H1 (cell line): ENCODE measurements at regions of chr15 and their contacts with region 1.

Region 1: GRCh38 chr15:40893733-40894688 is at the start of gene VPS18:
- DNase-seq: peak; percentile 95 to 100
- H3K4me3 ChIP-seq: peak within 1 kb of the TSS; percentile 60 to 93 (median 88)
- H3K27ac ChIP-seq: peak within 1 kb of the TSS; percentile 68
- H3K4me1 ChIP-seq: peaks cover 3 to 14% (median 7%) of the 10 kb centered on the region in 4 experiments; a peak in 6 of 7 replicates
- H3K27me3 ChIP-seq: peaks cover 0 to 8% (median 2%) of the 10 kb centered on the region in 4 experiments; a peak in 3 of 7 replicates
- CTCF ChIP-seq: peak; percentile 85 to 91 (median 89)
- EP300 ChIP-seq: no peak
- POLR2A ChIP-seq: peak in 1 of 2 experiments; percentile 35; a peak in 2 of 3 replicates
- RAD21 ChIP-seq: peak; percentile 87 to 88
- total RNA-seq, gene VPS18: 31.9 and 32.7 TPM in 2 replicates

Region 2: DNA sequence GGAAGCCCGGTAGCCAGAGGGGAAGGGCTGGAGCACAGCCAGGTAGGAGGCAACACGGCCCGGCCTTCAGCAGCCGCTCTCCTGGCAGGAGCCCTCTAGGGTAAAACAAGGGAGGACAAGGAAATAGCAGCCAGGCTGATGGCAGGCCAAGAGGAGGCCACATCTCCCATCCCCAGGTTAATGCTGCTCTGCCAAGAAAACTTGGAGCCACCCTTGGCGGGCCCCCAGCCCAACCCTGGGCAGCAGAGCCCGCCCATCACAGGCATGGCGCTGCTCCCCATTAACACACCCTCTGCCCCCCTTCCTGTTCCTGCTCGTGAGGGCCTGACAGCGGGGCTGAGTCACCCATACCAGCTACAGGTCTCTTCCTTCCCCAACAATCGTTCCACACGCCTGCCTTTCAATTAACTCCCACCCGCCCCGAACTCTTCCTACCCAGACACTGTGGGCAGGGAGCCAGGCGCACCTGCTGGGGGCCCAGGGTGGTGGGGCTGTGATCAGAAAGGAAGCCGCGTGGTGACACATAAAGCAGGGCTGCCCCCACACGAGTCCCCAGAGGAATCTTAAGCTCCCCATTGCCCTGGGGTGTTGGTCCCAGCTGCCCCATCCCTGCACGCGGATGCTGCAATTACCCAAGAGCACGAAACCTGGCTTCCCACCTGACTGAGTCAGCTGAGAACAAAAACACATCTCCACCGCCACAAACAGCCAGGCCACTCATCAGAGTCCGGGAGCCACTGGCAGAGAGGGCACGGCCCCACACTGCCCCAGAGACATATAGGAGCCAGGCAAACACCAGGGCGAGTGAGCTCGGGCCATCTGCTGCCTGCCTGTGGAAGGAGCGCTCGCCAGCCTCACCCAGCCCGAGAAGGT is 124.5 kb before region 1 on chr15 and contains the start of gene C15orf62:
- CTCF ChIA-PET with region 1: interaction called, 10 read pairs
- POLR2A ChIA-PET with region 1: interaction called, 3 read pairs
- DNase-seq: no peak
- H3K4me3 ChIP-seq: no peak within 1 kb of the TSS
- H3K27ac ChIP-seq: no peak within 1 kb of the TSS; the same call in 1 of the 2 replicates
- H3K4me1 ChIP-seq: peaks cover 5 to 27% (median 15%) of the 10 kb centered on the region in 4 experiments
- H3K27me3 ChIP-seq: no peaks in the 10 kb centered on the region
- CTCF ChIP-seq: no peak
- EP300 ChIP-seq: no peak
- POLR2A ChIP-seq: no peak; a peak in 1 of 3 replicates
- RAD21 ChIP-seq: no peak
- total RNA-seq, gene C15orf62: 0.56 and 0.57 TPM in 2 replicates

Region 3: GRCh38 chr15:40857601-40858341 is 36.2 kb before region 1 on chr15:
- CTCF ChIA-PET with region 1: interaction called, 208 read pairs
- POLR2A ChIA-PET with region 1: interaction called, 49 read pairs
- DNase-seq: peak in 1 of 2 experiments; percentile 99
- H3K4me3 ChIP-seq: no peak overlapping the region
- H3K27ac ChIP-seq: no peak overlapping the region
- H3K4me1 ChIP-seq: peaks cover 0 to 3% (median 0%) of the 10 kb centered on the region in 4 experiments; a peak in 1 of 7 replicates
- H3K27me3 ChIP-seq: no peaks in the 10 kb centered on the region
- CTCF ChIP-seq: peak; percentile 95 to 99 (median 99)
- EP300 ChIP-seq: peak in 1 of 2 experiments; percentile 19; a peak in 1 of 3 replicates
- POLR2A ChIP-seq: no peak; a peak in 1 of 3 replicates
- RAD21 ChIP-seq: peak; percentile 73 to 82

Region 4: GRCh38 chr15:40873625-40874561 is 20.1 kb before region 1 on chr15 and contains the start of gene RHOV:
- CTCF ChIA-PET with region 1: interaction called, 63 read pairs
- POLR2A ChIA-PET with region 1: interaction called, 8 read pairs
- DNase-seq: peak; percentile 51 to 87
- H3K4me3 ChIP-seq: peak within 1 kb of the TSS; percentile 45 to 70 (median 58)
- H3K27ac ChIP-seq: no peak within 1 kb of the TSS
- H3K4me1 ChIP-seq: peaks cover 0 to 18% (median 12%) of the 10 kb centered on the region in 4 experiments; a peak in 6 of 7 replicates
- H3K27me3 ChIP-seq: 0 out of 7 replicates have a peak, but pooled peaks cover 0 to 2% (median 0%) of the 10 kb centered on the region in 4 experiments
- CTCF ChIP-seq: peak; percentile 36 to 42 (median 40)
- EP300 ChIP-seq: no peak
- POLR2A ChIP-seq: peak in 1 of 2 experiments; percentile 53; a peak in 2 of 3 replicates
- RAD21 ChIP-seq: no peak; a peak in 1 of 4 replicates
- total RNA-seq, gene RHOV: 2.4 and 2.7 TPM in 2 replicates

Region 5: GRCh38 chr15:40941528-40942336 is 47.7 kb after region 1 on chr15:
- CTCF ChIA-PET with region 1: interaction called, 619 read pairs
- POLR2A ChIA-PET with region 1: interaction called, 5 read pairs
- DNase-seq: peak in 1 of 2 experiments; percentile 90
- H3K4me3 ChIP-seq: peak overlapping the region; percentile 30 to 64 (median 52)
- H3K27ac ChIP-seq: peak overlapping the region; percentile 58; the same call in 1 of the 2 replicates
- H3K4me1 ChIP-seq: peaks cover 0 to 28% (median 12%) of the 10 kb centered on the region in 4 experiments; a peak in 6 of 7 replicates
- H3K27me3 ChIP-seq: peaks cover 0 to 25% (median 16%) of the 10 kb centered on the region in 4 experiments; a peak in 6 of 7 replicates
- CTCF ChIP-seq: peak; percentile 71 to 80 (median 76)
- EP300 ChIP-seq: 0 out of 3 replicates have a peak, but pooled peaks of 1 of the 2 experiments have one; percentile 23
- POLR2A ChIP-seq: no peak
- RAD21 ChIP-seq: peak; percentile 36 to 71; a peak in 3 of 4 replicates

Region 6: GRCh38 chr15:40960926-40961325 is 66.9 kb after region 1 on chr15:
- CTCF ChIA-PET with region 1: interaction called, 10 read pairs
- POLR2A ChIA-PET with region 1: interaction called, 4 read pairs
- DNase-seq: no peak
- H3K4me3 ChIP-seq: no peak overlapping the region
- H3K27ac ChIP-seq: no peak overlapping the region
- H3K4me1 ChIP-seq: no peaks in the 10 kb centered on the region; a peak in 5 of 7 replicates
- H3K27me3 ChIP-seq: no peaks in the 10 kb centered on the region
- CTCF ChIP-seq: no peak
- EP300 ChIP-seq: no peak
- POLR2A ChIP-seq: no peak
- RAD21 ChIP-seq: no peak

Region 7: DNA sequence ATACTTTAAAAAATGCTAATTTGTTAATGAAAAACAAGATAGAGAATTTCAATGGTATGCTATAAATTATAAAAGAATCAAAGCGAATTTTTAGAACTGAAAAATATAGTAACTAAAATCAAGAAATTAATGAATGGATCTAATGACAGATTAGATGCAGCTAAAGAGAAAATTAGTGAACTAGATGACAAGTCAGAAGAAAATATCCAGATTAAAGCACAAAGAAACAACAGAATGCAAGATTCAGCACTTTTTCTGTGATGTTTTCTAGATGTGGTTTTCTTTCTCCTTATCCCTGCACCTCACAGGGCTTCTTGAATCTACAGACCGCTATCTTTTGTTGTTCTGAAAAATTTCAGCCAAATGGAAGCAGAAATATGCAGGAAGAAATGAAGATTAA is 167.7 kb after region 1 on chr15:
- CTCF ChIA-PET with region 1: no interaction called
- POLR2A ChIA-PET with region 1: no interaction called
- DNase-seq: no peak
- H3K4me3 ChIP-seq: no peak overlapping the region
- H3K27ac ChIP-seq: no peak overlapping the region
- H3K4me1 ChIP-seq: no peaks in the 10 kb centered on the region
- H3K27me3 ChIP-seq: no peaks in the 10 kb centered on the region
- CTCF ChIP-seq: no peak
- EP300 ChIP-seq: no peak
- POLR2A ChIP-seq: no peak
- RAD21 ChIP-seq: no peak

Region 8: DNA sequence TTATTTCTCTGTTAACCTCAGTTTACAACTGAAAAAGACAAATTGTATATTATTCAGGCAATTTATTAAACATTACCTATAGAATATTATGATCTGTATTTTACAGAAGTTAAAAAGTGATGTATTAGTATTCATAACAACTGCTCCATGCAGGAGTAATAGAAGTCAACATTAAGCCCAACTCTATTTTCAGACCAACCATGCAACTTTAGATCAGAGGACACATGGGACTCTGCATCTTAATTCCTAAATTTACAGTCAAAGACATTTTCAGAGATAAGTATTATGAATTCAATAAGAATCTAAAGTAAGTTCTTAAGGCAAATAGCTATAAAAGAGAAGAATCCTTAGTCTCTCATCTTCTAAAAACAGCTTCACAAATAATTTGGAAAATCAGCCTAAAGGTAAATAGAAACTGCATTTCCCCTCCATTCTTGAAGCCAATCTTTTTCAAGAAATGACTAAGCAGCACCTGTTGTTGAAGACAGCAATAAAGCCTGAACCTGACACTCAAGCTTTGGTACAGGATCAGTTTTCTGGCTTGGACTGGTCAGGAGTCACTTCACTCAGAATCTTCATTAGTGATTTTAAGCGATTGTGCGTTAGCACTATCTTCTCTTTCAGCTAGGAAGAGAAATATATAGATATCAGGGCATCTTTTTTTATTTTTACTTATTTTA is 415.4 kb after region 1 on chr15:
- CTCF ChIA-PET with region 1: no interaction called
- POLR2A ChIA-PET with region 1: no interaction called
- DNase-seq: no peak
- H3K4me3 ChIP-seq: no peak overlapping the region
- H3K27ac ChIP-seq: no peak overlapping the region
- H3K4me1 ChIP-seq: no peaks in the 10 kb centered on the region
- H3K27me3 ChIP-seq: no peaks in the 10 kb centered on the region
- CTCF ChIP-seq: no peak
- EP300 ChIP-seq: no peak
- POLR2A ChIP-seq: no peak
- RAD21 ChIP-seq: no peak